ENCODE measurements at regions of chr19 and their contacts with region 1.

Region 1: DNA sequence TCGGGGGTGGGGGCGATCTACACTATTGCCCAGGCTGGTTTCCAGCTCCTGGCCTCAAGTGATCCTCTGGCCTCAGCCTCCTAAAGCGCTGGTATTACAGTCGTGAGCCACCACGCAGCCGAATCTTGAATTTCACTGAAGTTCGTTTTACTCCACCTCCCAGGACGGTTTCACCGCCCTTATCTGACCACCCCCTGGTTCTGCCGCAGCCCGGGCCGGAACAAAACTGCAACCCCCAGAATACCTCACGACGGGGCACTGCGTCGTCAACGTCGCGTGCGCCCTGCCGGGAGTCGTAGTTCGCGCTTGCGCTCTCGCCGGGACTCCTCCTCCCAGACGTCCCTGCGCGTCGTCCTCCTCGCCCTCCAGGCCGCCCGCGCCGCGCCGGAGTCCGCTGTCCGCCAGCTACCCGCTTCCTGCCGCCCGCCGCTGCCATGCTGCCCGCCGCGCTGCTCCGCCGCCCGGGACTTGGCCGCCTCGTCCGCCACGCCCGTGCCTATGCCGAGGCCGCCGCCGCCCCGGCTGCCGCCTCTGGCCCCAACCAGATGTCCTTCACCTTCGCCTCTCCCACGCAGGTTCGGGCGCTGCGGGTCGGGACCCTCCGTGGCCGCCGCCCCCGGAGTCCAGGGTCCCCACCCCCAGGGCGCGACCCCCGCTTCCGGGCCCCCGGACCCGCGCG is at the start of gene ATP5F1D:
- DNase-seq: peak in 1 of 2 donors; percentile 95
- H3K4me3 ChIP-seq: peak within 1 kb of the TSS; percentile 72 to 93
- H3K27ac ChIP-seq: peak within 1 kb of the TSS; percentile 85 to 92
- H3K4me1 ChIP-seq: peaks cover 37 to 60% of the 10 kb centered on the region in 2 donors
- H3K27me3 ChIP-seq: no peaks in the 10 kb centered on the region
- CTCF ChIP-seq: no peak
- total RNA-seq, gene ATP5F1D: 232 TPM

Region 2: GRCh38 chr19:1026189-1027019 is 215.2 kb before region 1 on chr19 and contains the start of gene CNN2:
- intact Hi-C with region 1: loop called (anchors 5 kb)
- DNase-seq: peak in 1 of 2 donors; percentile 90
- H3K4me3 ChIP-seq: peak within 1 kb of the TSS; percentile 95 to 97
- H3K27ac ChIP-seq: peak within 1 kb of the TSS; percentile 99 to 100
- H3K4me1 ChIP-seq: peaks cover 21 to 34% of the 10 kb centered on the region in 2 donors
- H3K27me3 ChIP-seq: no peaks in the 10 kb centered on the region
- CTCF ChIP-seq: no peak
- total RNA-seq, gene CNN2: 79.1 TPM

Region 3: DNA sequence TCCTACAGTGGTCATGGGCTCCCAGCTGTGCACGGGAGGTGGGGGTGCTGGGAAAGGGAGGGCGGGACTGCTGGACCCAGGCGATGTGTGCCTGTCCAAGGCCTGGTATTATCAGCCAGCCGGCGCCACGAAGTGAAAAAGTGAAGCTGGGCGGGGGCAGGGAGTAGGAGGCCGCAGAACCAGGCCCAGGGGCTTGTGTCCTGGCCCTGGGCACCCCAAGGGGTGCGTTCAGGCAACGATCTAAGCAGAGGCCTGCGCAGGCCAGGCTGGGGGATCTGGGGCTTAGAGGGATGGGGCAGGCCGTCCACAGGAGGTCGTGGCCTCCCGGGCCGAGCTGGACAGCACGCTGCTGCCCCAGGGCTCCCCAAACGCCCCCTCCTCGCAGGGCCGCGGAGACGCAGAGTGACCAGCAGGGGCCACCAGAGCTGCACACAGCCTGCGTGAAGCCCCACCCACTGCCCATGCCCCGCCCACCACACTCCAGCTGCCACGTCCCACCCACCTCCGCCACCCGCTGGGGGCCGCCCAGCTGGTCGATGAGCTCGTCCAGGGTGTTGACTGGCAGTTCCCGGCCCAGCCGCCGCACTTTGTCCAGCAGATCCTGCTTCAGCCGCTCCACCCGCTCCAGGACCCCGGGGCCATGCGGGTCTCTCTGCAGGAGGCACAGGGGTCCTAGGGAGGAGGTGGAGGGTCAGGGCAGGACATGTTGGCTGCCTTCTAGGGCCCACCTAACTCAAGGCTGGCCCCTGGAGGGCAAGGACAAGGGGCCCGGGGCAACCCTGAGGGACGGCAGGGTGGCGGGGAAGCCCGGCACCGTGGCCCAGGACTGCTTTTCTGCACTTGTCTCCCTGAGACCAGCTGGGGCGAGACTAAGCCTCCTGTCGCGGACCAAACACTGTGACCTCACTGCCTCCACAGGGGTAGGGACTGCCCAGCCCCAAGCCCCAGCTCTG is 128.2 kb before region 1 on chr19:
- intact Hi-C with region 1: loop called (anchors 1 kb)
- DNase-seq: peak; percentile 81 to 97
- H3K4me3 ChIP-seq: peak overlapping the region in 1 of 2 donors; percentile 38
- H3K27ac ChIP-seq: peak overlapping the region; percentile 79 to 95
- H3K4me1 ChIP-seq: peaks cover 6 to 16% of the 10 kb centered on the region in 2 donors
- H3K27me3 ChIP-seq: no peaks in the 10 kb centered on the region
- CTCF ChIP-seq: peak; percentile 95 to 98 (median 95)

Region 4: GRCh38 chr19:1205114-1206062 is 36.2 kb before region 1 on chr19 and contains the start of gene STK11:
- intact Hi-C with region 1: loop called (anchors 1 kb)
- DNase-seq: peak; percentile 95 to 99
- H3K4me3 ChIP-seq: peak within 1 kb of the TSS; percentile 71 to 95
- H3K27ac ChIP-seq: peak within 1 kb of the TSS; percentile 80 to 84
- H3K4me1 ChIP-seq: peaks cover 9 to 26% of the 10 kb centered on the region in 2 donors
- H3K27me3 ChIP-seq: no peaks in the 10 kb centered on the region
- CTCF ChIP-seq: no peak
- total RNA-seq, gene STK11: 104 TPM

Region 5: DNA sequence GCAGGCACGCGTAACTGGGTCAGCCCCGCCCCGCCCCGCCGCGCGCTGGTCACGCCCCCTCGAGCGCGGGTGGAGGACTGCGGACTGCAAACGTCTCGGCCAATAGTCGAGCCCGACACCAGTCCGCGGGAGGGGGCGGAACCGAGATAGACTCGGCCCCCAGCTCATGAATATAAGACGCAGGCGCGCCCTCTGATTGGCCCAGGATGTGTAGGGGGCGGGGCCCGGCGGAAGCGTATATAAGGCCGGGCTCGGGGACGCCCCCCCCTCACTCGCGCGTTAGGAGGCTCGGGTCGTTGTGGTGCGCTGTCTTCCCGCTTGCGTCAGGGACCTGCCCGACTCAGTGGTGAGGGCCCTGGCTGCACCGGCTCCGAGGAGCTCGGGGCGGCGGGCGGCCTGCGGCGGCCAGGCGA is 27.5 kb after region 1 on chr19 and contains the start of gene CIRBP:
- intact Hi-C with region 1: loop called (anchors 1 kb)
- DNase-seq: peak; percentile 100
- H3K4me3 ChIP-seq: peak within 1 kb of the TSS; percentile 71 to 88
- H3K27ac ChIP-seq: peak within 1 kb of the TSS; percentile 94 to 95
- H3K4me1 ChIP-seq: peaks cover 34 to 71% of the 10 kb centered on the region in 2 donors
- H3K27me3 ChIP-seq: no peaks in the 10 kb centered on the region
- CTCF ChIP-seq: no peak
- total RNA-seq, gene CIRBP: 442 TPM